Transverse colon (tissue), 4 donors: ENCODE measurements at regions of chr12 and their contacts with region 1.

Region 1: DNA sequence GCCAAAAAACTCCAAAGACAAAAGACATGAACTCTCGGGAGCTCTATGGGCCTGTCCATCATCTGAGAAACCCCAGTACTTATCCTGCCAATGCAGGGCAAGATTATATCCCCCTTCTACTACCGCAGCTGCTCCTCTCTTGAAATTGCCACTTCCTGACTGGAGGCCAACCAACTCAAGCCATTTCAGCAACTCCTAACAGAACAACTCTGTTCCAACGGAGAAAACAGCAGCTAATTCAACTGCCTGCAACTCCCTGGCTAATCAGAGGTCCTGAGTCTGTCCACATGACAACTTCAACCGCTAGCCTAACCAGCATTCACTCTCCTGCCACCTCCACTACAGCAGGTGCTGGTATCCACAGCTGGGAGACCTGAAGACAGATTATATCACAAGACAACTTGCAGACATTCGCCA is 24.1 kb downstream of the CEP83 start:
- DNase-seq: no peak
- H3K4me3 ChIP-seq: no peak overlapping the region
- H3K27ac ChIP-seq: no peak overlapping the region
- H3K4me1 ChIP-seq: peaks cover 0 to 10% (median 5%) of the 10 kb centered on the region in 4 donors
- H3K27me3 ChIP-seq: no peaks in the 10 kb centered on the region
- CTCF ChIP-seq: no peak
- EP300 ChIP-seq: no peak
- POLR2A ChIP-seq: no peak

Region 2: DNA sequence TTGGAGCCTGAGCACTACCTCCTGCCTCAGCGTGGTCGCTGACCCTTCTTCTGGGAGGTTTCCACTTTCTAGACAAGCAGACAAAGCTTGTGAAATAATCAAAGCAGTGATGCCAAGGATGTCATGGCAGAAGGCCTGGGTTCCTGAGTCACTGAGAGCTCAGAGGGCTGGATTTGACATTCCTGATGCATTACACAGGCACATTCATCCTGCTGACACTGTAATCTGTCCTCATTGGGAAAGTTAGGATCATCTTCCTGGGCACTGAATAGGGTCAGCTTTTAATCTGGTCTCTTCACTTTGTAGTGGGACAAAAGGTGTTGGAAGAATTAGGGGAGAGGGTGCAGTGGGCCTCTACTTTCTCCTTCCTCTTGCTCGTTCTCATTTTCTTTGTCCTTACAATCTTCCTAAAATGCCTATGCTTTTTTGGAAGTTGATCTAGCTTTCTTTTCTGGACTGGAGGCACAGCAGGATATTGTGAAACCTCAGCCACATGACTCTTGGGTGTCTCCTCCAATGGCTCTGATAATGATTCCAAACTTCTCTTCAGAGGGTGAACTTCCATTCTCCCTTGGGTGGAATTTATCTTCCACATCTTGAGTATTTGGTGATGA is 1536.0 kb before region 1 on chr12:
- in situ Hi-C with region 1: no loop called
- intact Hi-C with region 1: no loop called
- DNase-seq: peak; percentile 59
- H3K4me3 ChIP-seq: no peak overlapping the region
- H3K27ac ChIP-seq: peak overlapping the region; percentile 67 to 81 (median 79)
- H3K4me1 ChIP-seq: peaks cover 0 to 36% (median 18%) of the 10 kb centered on the region in 4 donors
- H3K27me3 ChIP-seq: no peaks in the 10 kb centered on the region
- CTCF ChIP-seq: no peak
- EP300 ChIP-seq: no peak
- POLR2A ChIP-seq: no peak

Region 3: GRCh38 chr12:93243689-93244513 is 1191.6 kb before region 1 on chr12:
- in situ Hi-C with region 1: no loop called
- intact Hi-C with region 1: no loop called
- DNase-seq: peak; percentile 56
- H3K4me3 ChIP-seq: no peak overlapping the region
- H3K27ac ChIP-seq: peak overlapping the region; percentile 66 to 82 (median 76)
- H3K4me1 ChIP-seq: peaks cover 14 to 25% (median 19%) of the 10 kb centered on the region in 4 donors
- H3K27me3 ChIP-seq: no peaks in the 10 kb centered on the region
- CTCF ChIP-seq: no peak
- EP300 ChIP-seq: no peak
- POLR2A ChIP-seq: peak; percentile 13

Region 4: DNA sequence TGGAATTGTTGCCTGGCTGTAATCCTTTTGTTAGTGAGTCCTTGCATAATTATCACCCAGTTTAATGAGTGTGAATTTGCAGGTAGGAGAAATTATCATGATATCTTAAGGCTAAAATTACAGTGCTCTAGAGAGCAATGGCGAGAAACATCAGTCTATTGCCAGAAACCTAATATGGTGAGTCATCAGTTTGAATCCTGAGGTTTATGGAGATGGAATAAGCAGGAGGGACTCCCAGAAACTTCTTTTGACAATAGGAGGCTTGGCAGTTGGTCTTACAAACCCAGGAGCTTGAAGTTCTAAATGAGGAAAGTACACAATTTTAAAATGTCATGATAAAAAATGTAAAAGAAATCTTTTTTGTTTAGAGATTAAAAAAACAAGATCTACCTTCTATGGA is 789.8 kb before region 1 on chr12:
- in situ Hi-C with region 1: no loop called
- intact Hi-C with region 1: no loop called
- DNase-seq: no peak
- H3K4me3 ChIP-seq: no peak overlapping the region
- H3K27ac ChIP-seq: no peak overlapping the region
- H3K4me1 ChIP-seq: no peaks in the 10 kb centered on the region
- H3K27me3 ChIP-seq: no peaks in the 10 kb centered on the region
- CTCF ChIP-seq: no peak
- EP300 ChIP-seq: no peak
- POLR2A ChIP-seq: no peak

Region 5: GRCh38 chr12:94133964-94134795 is 301.3 kb before region 1 on chr12:
- in situ Hi-C with region 1: loop called (anchors 10 to 25 kb)
- intact Hi-C with region 1: no loop called
- DNase-seq: no peak
- H3K4me3 ChIP-seq: no peak overlapping the region
- H3K27ac ChIP-seq: no peak overlapping the region
- H3K4me1 ChIP-seq: peaks cover 0 to 4% (median 0%) of the 10 kb centered on the region in 4 donors
- H3K27me3 ChIP-seq: peaks cover 5% of the 10 kb centered on the region
- CTCF ChIP-seq: peak; percentile 77 to 88 (median 81)
- EP300 ChIP-seq: no peak
- POLR2A ChIP-seq: no peak

Region 6: GRCh38 chr12:94149119-94149780 is 286.3 kb before region 1 on chr12:
- in situ Hi-C with region 1: loop called in 2 of 4 experiments (anchors 25 kb)
- intact Hi-C with region 1: loop called (anchors 10 kb)
- DNase-seq: peak; percentile 52
- H3K4me3 ChIP-seq: peak overlapping the region; percentile 41 to 71 (median 50)
- H3K27ac ChIP-seq: peak overlapping the region; percentile 36 to 72 (median 59)
- H3K4me1 ChIP-seq: peaks cover 0 to 48% (median 45%) of the 10 kb centered on the region in 4 donors
- H3K27me3 ChIP-seq: peaks cover 46% of the 10 kb centered on the region
- CTCF ChIP-seq: peak in 2 of 5 experiments; percentile 10 to 19
- EP300 ChIP-seq: no peak
- POLR2A ChIP-seq: no peak

Region 7: DNA sequence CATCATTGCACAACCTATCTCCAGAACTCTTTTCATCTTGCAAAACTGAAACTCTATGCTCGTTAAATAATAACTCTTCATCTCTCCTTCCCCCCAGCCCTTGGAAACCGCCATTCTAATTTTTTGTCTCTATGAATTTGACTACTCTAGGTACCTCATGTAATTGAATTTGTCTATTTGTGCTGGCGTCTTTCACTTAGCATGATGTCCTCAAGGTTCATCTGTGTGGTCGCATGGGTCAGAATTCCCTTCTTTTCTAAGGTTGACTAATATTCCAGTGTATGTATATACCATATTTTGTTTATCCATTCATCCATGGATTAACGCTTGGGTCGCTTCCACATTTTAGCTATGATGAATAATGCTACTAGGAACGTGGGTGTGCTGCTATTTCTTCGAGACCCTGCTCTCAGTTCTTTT is 207.0 kb before region 1 on chr12:
- in situ Hi-C with region 1: no loop called
- intact Hi-C with region 1: loop called (anchors 5 kb)
- DNase-seq: no peak
- H3K4me3 ChIP-seq: no peak overlapping the region
- H3K27ac ChIP-seq: no peak overlapping the region
- H3K4me1 ChIP-seq: no peaks in the 10 kb centered on the region
- H3K27me3 ChIP-seq: no peaks in the 10 kb centered on the region
- CTCF ChIP-seq: no peak
- EP300 ChIP-seq: no peak
- POLR2A ChIP-seq: no peak